Testis (tissue), 5 donors: ENCODE measurements at regions of chr14 and their contacts with region 1.

Region 1: DNA sequence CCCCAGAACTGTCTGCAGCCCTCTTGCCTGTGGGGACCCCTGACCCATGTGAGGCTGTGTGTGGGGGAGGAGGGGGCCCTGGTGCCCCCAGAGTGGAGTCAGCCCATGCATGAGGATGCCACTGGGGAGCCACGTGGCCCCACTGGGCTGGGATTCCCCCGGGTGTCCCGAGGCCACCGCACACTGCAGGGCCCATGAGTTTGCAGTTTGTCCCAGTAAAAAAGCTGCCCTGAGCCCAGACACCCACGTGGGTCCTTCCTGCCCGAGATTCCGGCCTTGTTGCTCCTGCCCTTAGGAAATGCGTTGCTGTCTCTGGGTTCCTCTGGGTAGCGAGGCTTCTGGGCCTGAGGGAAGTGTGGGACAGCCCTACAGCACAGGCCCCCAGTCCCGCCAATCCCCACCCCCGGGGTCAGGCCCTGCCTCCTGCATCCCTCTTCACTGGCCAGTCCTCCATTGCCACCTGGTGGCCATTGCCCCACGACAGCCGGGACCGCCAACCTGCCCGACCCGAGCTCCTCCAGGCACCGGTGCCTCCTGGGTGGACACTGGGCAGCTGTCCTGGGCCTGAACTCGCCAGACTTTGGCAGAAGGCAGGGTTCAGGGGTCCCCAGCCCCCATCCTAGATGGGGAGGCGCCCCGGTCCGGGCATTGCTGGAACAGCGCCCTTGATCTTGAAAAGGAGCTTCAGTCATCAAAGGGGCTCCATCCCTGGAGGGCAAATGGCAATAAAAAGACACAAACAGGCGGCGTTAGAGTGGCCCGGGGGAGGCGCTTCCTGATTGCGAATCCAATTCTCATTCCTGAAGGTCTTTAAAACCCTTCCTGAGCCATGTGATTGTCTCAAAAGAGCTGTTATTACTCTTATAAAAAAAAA is 15.6 kb upstream of the C14orf180 start:
- DNase-seq: peak; percentile 85
- H3K4me3 ChIP-seq: no peak overlapping the region
- H3K27ac ChIP-seq: no peak overlapping the region
- H3K4me1 ChIP-seq: peaks cover 3% of the 10 kb centered on the region
- H3K27me3 ChIP-seq: no peaks in the 10 kb centered on the region
- CTCF ChIP-seq: peak; percentile 77 to 85 (median 80)
- POLR2A ChIP-seq: no peak

Region 2: DNA sequence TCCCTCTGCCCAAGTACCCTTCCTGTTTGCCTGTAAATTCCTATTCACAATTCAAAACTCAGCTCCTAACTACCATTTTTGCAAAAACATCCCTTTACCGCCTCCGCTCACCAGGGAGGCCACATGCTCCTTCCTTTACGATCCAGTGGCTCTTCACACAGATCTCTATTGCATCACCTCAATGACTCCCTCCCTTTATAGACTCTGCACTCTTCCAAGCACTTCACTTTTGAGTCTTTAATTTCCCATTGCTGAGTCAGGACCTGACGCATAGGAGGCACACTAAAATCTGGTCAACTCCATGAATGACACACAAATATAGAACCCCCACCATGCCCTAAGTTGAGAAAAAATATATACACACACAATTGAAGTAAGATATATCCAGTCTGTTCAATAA is 762.5 kb before region 1 on chr14:
- intact Hi-C with region 1: no loop called
- DNase-seq: no peak
- H3K4me3 ChIP-seq: no peak overlapping the region
- H3K27ac ChIP-seq: no peak overlapping the region
- H3K4me1 ChIP-seq: no peaks in the 10 kb centered on the region
- H3K27me3 ChIP-seq: no peaks in the 10 kb centered on the region
- CTCF ChIP-seq: no peak
- POLR2A ChIP-seq: no peak

Region 3: GRCh38 chr14:104137297-104138097 is 426.5 kb before region 1 on chr14:
- intact Hi-C with region 1: loop called (anchors 5 kb)
- DNase-seq: peak; percentile 70
- H3K4me3 ChIP-seq: peak overlapping the region; percentile 49 to 56
- H3K27ac ChIP-seq: no peak overlapping the region
- H3K4me1 ChIP-seq: peaks cover 6% of the 10 kb centered on the region
- H3K27me3 ChIP-seq: no peaks in the 10 kb centered on the region
- CTCF ChIP-seq: peak; percentile 91 to 94 (median 94)
- POLR2A ChIP-seq: no peak